Activated CD4-positive, alpha-beta T cell treated with anti-CD3 and anti-CD28 coated beads, Interleukin-2, amount 10 ng/mL, durations not matched to agents 24 days and 14 days (primary cell): ENCODE measurements at regions of chr7 and their contacts with region 1.

Region 1: GRCh38 chr7:127667017-127667670 is 15.2 kb downstream of the SND1 start:
- DNase-seq: no peak
- H3K4me3 Mint-ChIP-seq: peak overlapping the region; percentile 16
- H3K27ac Mint-ChIP-seq: peak overlapping the region; percentile 59
- H3K4me1 Mint-ChIP-seq: peaks cover 48% of the 10 kb centered on the region
- H3K27me3 Mint-ChIP-seq: no peaks in the 10 kb centered on the region

Region 2: GRCh38 chr7:127557803-127558202 is 109.3 kb before region 1 on chr7:
- intact Hi-C with region 1: no loop called
- DNase-seq: no peak
- H3K4me3 Mint-ChIP-seq: no peak overlapping the region
- H3K27ac Mint-ChIP-seq: no peak overlapping the region
- H3K4me1 Mint-ChIP-seq: no peaks in the 10 kb centered on the region
- H3K27me3 Mint-ChIP-seq: peaks cover 5% of the 10 kb centered on the region

Region 3: GRCh38 chr7:127651556-127652332 is 15.4 kb before region 1 on chr7 and contains the start of gene SND1:
- intact Hi-C with region 1: loop called (anchors 2 kb)
- DNase-seq: peak; percentile 100
- H3K4me3 Mint-ChIP-seq: peak within 1 kb of the TSS; percentile 99
- H3K27ac Mint-ChIP-seq: peak within 1 kb of the TSS; percentile 97
- H3K4me1 Mint-ChIP-seq: peaks cover 31% of the 10 kb centered on the region
- H3K27me3 Mint-ChIP-seq: peaks cover 6% of the 10 kb centered on the region
- total RNA-seq, gene SND1: 275 and 295 TPM in 2 replicates

Region 4: GRCh38 chr7:127683776-127684681 is 16.9 kb after region 1 on chr7:
- intact Hi-C with region 1: loop called (anchors 2 kb)
- DNase-seq: no peak
- H3K4me3 Mint-ChIP-seq: no peak overlapping the region
- H3K27ac Mint-ChIP-seq: peak overlapping the region; percentile 42
- H3K4me1 Mint-ChIP-seq: peaks cover 35% of the 10 kb centered on the region
- H3K27me3 Mint-ChIP-seq: no peaks in the 10 kb centered on the region